ENCODE measurements at regions of chr2 and their contacts with region 1.

Region 1: DNA sequence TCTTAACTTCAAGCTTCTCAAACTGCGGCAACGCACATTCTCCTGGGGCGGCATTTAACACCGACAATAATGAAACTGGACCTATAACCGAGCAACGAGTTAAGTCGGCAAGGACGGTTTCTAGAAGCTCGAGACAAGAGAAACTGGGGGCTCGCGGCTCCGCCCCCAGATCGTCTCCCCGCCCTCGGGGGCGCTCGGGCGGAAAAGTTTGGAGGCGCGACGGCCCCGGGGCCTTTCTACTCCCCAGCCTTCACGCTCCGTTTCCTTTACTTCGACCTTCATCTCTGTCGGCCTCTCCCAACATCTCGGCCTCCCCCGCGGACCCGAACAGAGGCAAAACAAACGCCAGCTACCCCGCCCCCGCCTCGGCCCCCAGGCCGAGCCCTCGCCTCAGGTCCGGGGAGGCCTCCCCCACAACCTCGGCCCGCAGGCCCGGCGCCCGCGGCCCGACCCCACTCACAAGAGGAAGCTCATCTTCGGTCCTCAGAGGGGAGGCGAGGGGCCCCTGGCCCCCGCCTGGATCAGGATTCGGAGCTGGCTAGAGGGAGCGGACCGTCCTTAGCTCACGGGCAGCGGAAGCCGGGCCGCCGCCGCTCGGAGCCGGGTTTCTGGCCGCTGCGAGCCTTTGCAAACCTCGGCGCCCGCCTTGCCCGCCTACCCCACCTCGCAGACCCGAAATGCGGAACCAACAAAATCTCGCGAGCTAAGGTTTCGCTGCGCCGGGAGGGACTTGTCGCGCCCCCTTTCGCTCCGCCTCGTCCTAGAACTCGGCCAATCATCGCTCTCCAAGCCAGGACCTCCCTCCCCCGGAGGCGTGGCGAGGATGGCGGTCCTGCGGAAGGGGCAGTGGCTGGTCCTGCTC is at the start of gene MOB1A:
- H3K4me3 ChIP-seq: peak within 1 kb of the TSS; percentile 86
- H3K27ac ChIP-seq: peak within 1 kb of the TSS; percentile 88
- H3K4me1 ChIP-seq: no peaks in the 10 kb centered on the region
- CTCF ChIP-seq: no peak

Region 2: GRCh38 chr2:73736855-73737779 is 441.3 kb before region 1 on chr2 and contains the start of gene TPRKB:
- CTCF ChIA-PET with region 1: no interaction called
- POLR2A ChIA-PET with region 1: interaction called, 13 read pairs
- H3K4me3 ChIP-seq: peak within 1 kb of the TSS; percentile 88
- H3K27ac ChIP-seq: peak within 1 kb of the TSS; percentile 44
- H3K4me1 ChIP-seq: peaks cover 4% of the 10 kb centered on the region; the same call in 1 of the 2 replicates
- CTCF ChIP-seq: no peak

Region 3: GRCh38 chr2:74119912-74120825 is 58.3 kb before region 1 on chr2:
- CTCF ChIA-PET with region 1: interaction called, 3 read pairs
- POLR2A ChIA-PET with region 1: interaction called, 11 read pairs
- H3K4me3 ChIP-seq: peak overlapping the region; percentile 78
- H3K27ac ChIP-seq: peak overlapping the region; percentile 96
- H3K4me1 ChIP-seq: no peaks in the 10 kb centered on the region
- CTCF ChIP-seq: peak; percentile 98

Region 4: DNA sequence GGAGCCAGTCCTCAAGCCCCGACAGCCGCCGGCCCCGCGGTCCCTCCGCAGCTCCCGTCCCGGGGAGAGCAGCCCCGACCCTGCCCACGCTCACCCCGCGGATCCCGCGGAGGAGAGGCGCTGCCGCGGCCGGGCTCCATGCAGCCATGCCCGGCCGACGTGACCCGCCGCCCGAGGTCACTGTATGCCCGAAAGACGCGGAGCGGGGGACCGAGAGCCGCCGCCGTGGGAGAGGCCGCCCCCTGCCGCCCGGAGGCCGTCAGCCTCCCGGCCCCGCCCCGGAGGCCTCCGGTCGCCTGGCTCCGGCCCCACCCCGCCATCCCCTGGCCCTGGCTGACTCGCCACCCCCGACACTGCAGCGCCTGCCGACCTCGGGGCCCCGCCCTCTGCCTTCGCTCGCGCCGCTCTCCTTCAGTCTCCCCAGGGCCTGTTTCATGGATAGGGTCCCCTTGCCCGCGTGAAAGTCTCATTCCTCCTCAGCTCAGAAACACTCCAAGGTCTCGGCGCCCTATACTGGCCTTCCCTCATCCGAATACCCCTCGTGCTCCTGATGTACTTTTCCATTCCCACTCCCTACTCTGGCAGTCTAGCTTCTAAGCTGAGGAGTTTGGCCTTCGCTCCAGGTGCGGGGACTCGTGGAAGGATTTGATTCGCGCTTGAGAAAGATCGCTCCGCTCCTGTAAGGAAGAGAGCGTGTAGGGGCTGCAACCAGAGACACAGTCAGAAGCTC is 30.5 kb before region 1 on chr2 and contains the start of gene BOLA3:
- CTCF ChIA-PET with region 1: interaction called, 6 read pairs
- POLR2A ChIA-PET with region 1: interaction called, 22 read pairs
- H3K4me3 ChIP-seq: peak within 1 kb of the TSS; percentile 63
- H3K27ac ChIP-seq: peak within 1 kb of the TSS; percentile 67
- H3K4me1 ChIP-seq: no peaks in the 10 kb centered on the region
- CTCF ChIP-seq: peak; percentile 59

Region 5: GRCh38 chr2:74198461-74199274 is 20.2 kb after region 1 on chr2 and contains the start of gene MTHFD2:
- CTCF ChIA-PET with region 1: interaction called, 9 read pairs
- POLR2A ChIA-PET with region 1: interaction called, 52 read pairs
- H3K4me3 ChIP-seq: peak within 1 kb of the TSS; percentile 76
- H3K27ac ChIP-seq: peak within 1 kb of the TSS; percentile 97
- H3K4me1 ChIP-seq: peaks cover 8% of the 10 kb centered on the region; the same call in 1 of the 2 replicates
- CTCF ChIP-seq: peak; percentile 90

Measured in HEK293 (cell line).